ENCODE measurements at regions of chr17 and their contacts with region 1.

Region 1: DNA sequence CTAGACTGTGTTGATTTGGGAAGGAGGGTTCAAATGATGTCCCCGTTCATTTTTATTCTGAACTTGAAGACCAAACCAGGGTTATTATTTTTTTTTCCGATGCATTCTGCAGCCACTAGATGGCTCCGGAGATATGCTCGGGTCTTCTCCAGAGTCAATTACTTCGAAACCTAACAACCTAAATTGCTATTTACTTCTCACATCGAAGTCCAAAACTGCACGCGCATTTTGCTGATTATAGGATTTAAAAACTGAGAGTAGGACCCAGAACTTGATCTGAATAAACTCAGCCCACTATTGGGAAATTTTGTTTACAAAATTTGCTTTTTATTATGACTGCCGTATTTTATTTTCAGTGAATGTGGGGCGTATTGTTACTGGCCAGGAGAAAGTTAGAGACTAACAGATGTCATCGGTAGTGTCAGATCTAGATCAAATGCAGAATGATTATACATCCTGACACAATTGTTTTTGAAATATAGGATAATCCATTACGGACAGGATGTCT is 263.8 kb downstream of the HS3ST3A1 start:
- DNase-seq: peak; percentile 18
- H3K4me3 ChIP-seq: no peak overlapping the region
- H3K27ac ChIP-seq: no peak overlapping the region
- H3K4me1 ChIP-seq: no peaks in the 10 kb centered on the region
- H3K27me3 ChIP-seq: no peaks in the 10 kb centered on the region
- CTCF ChIP-seq: peak; percentile 42 to 48
- POLR2A ChIP-seq: no peak

Region 2: GRCh38 chr17:14926526-14927122 is 1588.7 kb after region 1 on chr17:
- CTCF ChIA-PET with region 1: interaction called, 9 read pairs
- POLR2A ChIA-PET with region 1: no interaction called
- dilution Hi-C with region 1: no loop called
- intact Hi-C with region 1: loop called (anchors 1 kb)
- DNase-seq: peak; percentile 38
- H3K4me3 ChIP-seq: no peak overlapping the region
- H3K27ac ChIP-seq: no peak overlapping the region
- H3K4me1 ChIP-seq: no peaks in the 10 kb centered on the region
- H3K27me3 ChIP-seq: no peaks in the 10 kb centered on the region
- CTCF ChIP-seq: peak; percentile 50 to 69
- POLR2A ChIP-seq: no peak

Region 3: DNA sequence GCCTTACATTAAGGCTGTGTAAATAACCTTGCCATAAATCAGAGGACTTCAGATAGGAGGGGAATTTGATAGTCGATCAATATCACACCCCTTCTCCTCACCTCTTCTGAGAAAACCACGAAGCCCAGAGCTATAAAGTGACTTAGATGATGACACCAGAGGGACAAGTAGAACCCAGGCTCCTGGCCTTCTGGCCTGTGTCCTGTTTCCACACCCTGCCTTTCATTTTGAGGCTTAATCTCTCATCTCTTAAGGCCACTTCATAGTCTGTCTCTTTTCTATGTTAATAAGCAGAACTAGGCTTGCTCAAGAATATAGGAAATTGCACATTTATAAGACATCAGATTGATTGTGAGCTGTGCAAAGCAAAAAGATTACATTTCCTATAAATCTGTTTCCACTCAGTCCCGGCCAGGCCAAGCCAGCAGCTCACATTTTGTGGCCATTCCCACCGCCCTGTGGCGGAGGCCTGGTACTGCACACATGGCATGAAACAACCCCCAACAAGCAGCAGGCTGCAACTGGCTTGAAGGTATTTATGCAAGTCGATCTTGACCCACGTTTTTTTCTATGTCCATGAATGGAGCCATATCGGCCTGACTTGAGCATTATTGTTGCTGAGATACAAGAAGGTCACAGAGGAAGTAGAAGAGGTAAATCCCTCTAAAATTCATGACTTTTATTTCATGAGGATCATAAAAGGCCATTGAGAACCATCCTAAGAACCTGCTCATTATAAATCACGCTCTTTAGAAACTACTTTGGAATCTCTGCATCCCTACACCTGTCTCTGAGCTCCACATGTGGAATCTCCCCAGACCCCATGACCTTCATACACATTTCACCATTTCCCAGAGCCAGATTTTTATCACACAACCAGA is 1833.5 kb after region 1 on chr17:
- CTCF ChIA-PET with region 1: interaction called, 3 read pairs
- POLR2A ChIA-PET with region 1: no interaction called
- dilution Hi-C with region 1: no loop called
- intact Hi-C with region 1: loop called (anchors 2 kb)
- DNase-seq: peak; percentile 54
- H3K4me3 ChIP-seq: no peak overlapping the region
- H3K27ac ChIP-seq: no peak overlapping the region
- H3K4me1 ChIP-seq: no peaks in the 10 kb centered on the region
- H3K27me3 ChIP-seq: peaks cover 0 to 1% of the 10 kb centered on the region in 2 experiments
- CTCF ChIP-seq: peak; percentile 62 to 75
- POLR2A ChIP-seq: no peak